Caco-2 (cell line): ENCODE measurements at regions of chr19 and their contacts with region 1.

Region 1: GRCh38 chr19:3094601-3095437 is 657 bp downstream of the GNA11 start:
- DNase-seq: no peak
- H3K4me3 ChIP-seq: peak overlapping the region; percentile 99
- H3K4me3 Mint-ChIP-seq: peak overlapping the region; percentile 87
- H3K27ac Mint-ChIP-seq: peak overlapping the region; percentile 89
- H3K4me1 ChIP-seq: peaks cover 35% of the 10 kb centered on the region
- H3K4me1 Mint-ChIP-seq: no peaks in the 10 kb centered on the region
- H3K27me3 ChIP-seq: no peaks in the 10 kb centered on the region
- H3K27me3 Mint-ChIP-seq: no peaks in the 10 kb centered on the region
- CTCF ChIP-seq: no peak

Region 2: GRCh38 chr19:2983351-2984195 is 111.2 kb before region 1 on chr19:
- CTCF ChIA-PET with region 1: no interaction called
- POLR2A ChIA-PET with region 1: no interaction called
- intact Hi-C with region 1: no loop called
- DNase-seq: peak in 1 of 2 experiments; percentile 36
- H3K4me3 ChIP-seq: no peak overlapping the region
- H3K4me3 Mint-ChIP-seq: no peak overlapping the region
- H3K27ac Mint-ChIP-seq: no peak overlapping the region
- H3K4me1 ChIP-seq: 0 out of 2 replicates have a peak, but pooled peaks cover 6% of the 10 kb centered on the region
- H3K4me1 Mint-ChIP-seq: no peaks in the 10 kb centered on the region
- H3K27me3 ChIP-seq: no peaks in the 10 kb centered on the region
- H3K27me3 Mint-ChIP-seq: no peaks in the 10 kb centered on the region
- CTCF ChIP-seq: no peak

Region 3: GRCh38 chr19:3108775-3109174 is 14.0 kb after region 1 on chr19:
- CTCF ChIA-PET with region 1: interaction called, 10 read pairs
- POLR2A ChIA-PET with region 1: no interaction called
- intact Hi-C with region 1: no loop called
- DNase-seq: peak; percentile 66 to 70
- H3K4me3 ChIP-seq: no peak overlapping the region
- H3K4me3 Mint-ChIP-seq: no peak overlapping the region
- H3K27ac Mint-ChIP-seq: peak overlapping the region; percentile 55
- H3K4me1 ChIP-seq: no peaks in the 10 kb centered on the region; the same call in 1 of the 2 replicates
- H3K4me1 Mint-ChIP-seq: no peaks in the 10 kb centered on the region
- H3K27me3 ChIP-seq: no peaks in the 10 kb centered on the region
- H3K27me3 Mint-ChIP-seq: no peaks in the 10 kb centered on the region
- CTCF ChIP-seq: peak; percentile 72 to 74